ENCODE measurements at regions of chr6 and their contacts with region 1.

Region 1: GRCh38 chr6:159726918-159727716 is at the start of gene WTAP:
- DNase-seq: peak; percentile 97
- H3K4me3 ChIP-seq: peak within 1 kb of the TSS; percentile 84 to 92 (median 91)
- H3K27ac ChIP-seq: peak within 1 kb of the TSS; percentile 89
- H3K4me1 ChIP-seq: peaks cover 16% of the 10 kb centered on the region
- H3K27me3 ChIP-seq: no peaks in the 10 kb centered on the region
- CTCF ChIP-seq: no peak
- total RNA-seq, gene WTAP: 64.5 to 92.0 TPM

Region 2: DNA sequence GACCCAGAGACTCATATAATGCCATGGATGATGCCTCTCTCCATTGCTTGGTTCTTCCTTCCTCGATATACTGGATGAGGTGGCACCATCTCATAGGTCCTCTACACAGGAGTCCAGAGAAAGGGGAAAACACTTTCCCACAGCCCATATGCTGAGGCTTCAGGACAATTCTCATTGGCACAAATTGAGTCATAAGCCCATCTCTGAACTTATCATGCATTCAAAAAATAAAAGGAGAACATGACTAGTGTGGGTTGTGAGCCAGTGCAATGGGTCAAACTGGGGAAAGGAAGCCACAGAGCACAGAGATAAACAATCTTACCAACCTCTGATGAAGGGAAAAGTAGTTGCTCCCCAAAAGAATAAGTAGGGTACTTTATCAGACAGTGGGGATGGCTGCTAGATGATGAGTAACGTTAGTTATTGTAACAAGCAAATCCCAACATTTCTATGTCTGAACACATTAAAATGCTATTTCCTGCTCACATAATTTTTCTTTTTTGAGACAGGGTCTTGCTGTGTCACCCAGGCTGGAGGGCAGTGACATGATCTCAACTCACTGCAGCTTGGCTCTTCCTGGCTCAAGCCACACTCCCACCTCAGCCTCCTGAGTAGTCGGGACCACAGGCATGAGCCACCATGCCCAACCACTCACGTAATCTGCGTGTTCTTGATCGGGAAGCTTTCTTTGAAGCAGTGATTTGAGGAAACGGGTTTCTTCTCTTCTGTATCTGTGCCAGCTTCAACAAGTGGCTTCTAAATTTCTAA is 61.1 kb before region 1 on chr6:
- CTCF ChIA-PET with region 1: interaction called, 15 read pairs
- dilution Hi-C with region 1: no loop called
- in situ Hi-C with region 1: no loop called
- intact Hi-C with region 1: no loop called
- DNase-seq: no peak
- H3K4me3 ChIP-seq: no peak overlapping the region
- H3K27ac ChIP-seq: no peak overlapping the region
- H3K4me1 ChIP-seq: no peaks in the 10 kb centered on the region
- H3K27me3 ChIP-seq: no peaks in the 10 kb centered on the region
- CTCF ChIP-seq: no peak

Region 3: DNA sequence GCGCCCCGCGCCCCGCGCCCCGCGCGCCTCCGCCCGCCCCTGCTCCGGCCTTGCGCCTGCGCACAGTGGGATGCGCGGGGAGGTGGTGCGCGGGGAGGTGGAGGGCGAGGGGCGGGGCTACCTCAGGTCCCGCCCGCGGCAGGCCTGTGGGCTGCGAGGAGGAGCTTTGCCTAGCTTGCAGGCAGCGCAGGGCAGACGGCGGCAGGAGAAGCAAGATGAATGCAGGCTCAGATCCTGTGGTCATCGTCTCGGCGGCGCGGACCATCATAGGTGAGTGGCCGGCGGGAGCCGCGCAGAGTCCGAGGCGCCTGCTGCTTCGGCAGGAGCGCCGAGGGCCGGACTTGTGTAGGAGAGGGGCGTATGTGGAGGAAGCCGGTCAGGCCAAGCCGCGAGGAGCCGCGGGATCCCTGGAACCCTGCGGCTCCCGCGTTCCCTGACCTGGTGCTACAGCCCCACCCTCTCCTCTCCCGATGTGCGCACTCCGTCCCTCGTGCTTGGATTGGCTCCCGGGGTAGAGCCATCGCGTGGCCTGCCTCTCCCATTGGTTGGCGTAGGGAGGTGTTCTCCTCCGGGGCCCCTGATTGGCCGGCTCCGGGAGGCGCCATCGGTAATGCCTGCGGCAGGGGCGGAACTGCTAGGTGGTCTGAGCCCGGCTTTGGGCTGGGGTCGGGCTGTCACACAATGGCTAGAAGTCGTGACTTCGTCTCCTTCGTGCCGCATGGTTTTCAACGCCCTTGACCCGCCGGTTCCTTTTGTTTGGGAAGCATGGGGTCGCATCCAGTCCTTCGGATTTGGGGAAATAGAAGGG is 35.0 kb after region 1 on chr6 and contains the start of gene ACAT2:
- CTCF ChIA-PET with region 1: interaction called, 5 read pairs
- dilution Hi-C with region 1: no loop called
- in situ Hi-C with region 1: no loop called
- intact Hi-C with region 1: loop called (anchors 2 kb)
- DNase-seq: peak; percentile 95
- H3K4me3 ChIP-seq: peak within 1 kb of the TSS; percentile 49 to 72 (median 65)
- H3K27ac ChIP-seq: peak within 1 kb of the TSS; percentile 68
- H3K4me1 ChIP-seq: peaks cover 26% of the 10 kb centered on the region
- H3K27me3 ChIP-seq: no peaks in the 10 kb centered on the region
- CTCF ChIP-seq: no peak
- total RNA-seq, gene ACAT2: 39.3 to 235 TPM

Region 4: DNA sequence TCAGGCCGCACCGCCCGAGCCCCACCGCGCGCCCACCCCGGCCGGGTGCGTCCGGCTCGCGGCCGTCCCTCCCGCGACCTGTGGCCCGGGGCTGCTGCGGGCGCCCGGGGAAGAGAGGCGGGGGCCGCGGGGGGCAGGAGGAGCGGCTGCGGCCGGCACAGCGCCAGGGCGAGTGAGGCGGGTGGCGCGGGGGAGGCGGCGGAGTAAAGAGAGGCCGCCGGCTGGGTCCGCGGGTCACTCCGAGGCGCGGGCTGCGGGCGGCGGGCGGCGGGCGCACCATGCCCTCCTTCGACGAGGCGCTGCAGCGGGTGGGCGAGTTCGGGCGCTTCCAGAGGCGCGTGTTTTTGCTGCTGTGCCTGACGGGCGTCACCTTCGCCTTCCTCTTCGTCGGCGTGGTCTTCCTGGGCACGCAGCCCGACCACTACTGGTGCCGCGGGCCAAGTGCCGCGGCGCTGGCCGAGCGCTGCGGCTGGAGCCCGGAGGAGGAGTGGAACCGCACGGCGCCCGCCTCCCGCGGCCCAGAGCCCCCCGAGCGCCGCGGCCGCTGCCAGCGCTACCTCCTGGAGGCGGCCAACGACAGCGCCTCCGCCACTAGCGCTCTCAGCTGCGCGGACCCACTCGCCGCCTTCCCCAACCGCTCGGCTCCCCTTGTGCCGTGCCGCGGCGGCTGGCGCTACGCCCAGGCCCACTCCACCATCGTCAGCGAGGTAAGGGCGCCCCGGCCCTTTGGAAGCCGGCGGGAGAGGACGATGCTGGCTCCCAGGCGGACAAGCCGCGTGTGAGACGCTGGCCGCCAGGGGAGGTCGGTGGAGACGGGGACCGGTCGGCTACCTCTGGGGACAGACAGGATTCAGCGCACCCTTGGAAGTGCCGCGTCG is 621.3 kb after region 1 on chr6 and contains the start of gene SLC22A3:
- CTCF ChIA-PET with region 1: no interaction called
- dilution Hi-C with region 1: no loop called
- in situ Hi-C with region 1: no loop called
- intact Hi-C with region 1: no loop called
- DNase-seq: peak; percentile 31
- H3K4me3 ChIP-seq: peak within 1 kb of the TSS; percentile 31 to 70 (median 55)
- H3K27ac ChIP-seq: no peak within 1 kb of the TSS
- H3K4me1 ChIP-seq: peaks cover 6% of the 10 kb centered on the region
- H3K27me3 ChIP-seq: no peaks in the 10 kb centered on the region
- CTCF ChIP-seq: peak in 1 of 2 donors; percentile 43
- total RNA-seq, gene SLC22A3: 0.33 to 1.4 TPM

Measured in mammary epithelial cell (primary cell).